ENCODE measurements at regions of chr3 and their contacts with region 1.

Region 1: DNA sequence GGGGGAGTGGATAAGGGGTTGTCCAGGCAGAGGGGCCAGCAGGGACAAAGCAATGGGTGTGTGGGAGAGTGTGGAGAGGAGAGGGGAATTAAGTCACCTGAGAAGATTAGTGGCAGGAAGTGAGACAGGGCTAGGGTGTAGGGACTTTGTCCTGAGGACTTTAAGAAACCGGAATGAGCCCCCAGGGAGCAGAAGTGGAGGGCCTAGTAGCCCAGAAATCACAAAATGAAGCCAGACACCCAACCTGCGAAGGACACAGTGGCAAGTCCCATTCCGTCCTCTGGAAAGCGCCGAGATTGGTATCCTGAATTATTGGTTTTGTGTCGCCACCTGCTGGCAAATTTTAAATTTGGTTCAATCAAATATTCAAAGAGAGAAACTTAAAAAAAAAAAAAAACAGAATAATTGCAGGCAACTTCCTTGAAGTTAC is 78.0 kb upstream of the SLC25A36 start:
- DNase-seq: peak; percentile 85
- H3K4me3 Mint-ChIP-seq: no peak overlapping the region
- H3K27ac Mint-ChIP-seq: no peak overlapping the region
- H3K4me1 Mint-ChIP-seq: no peaks in the 10 kb centered on the region
- H3K27me3 Mint-ChIP-seq: peaks cover 4% of the 10 kb centered on the region

Region 2: GRCh38 chr3:140128631-140129030 is 735.0 kb before region 1 on chr3:
- intact Hi-C with region 1: loop called (anchors 5 kb)
- DNase-seq: peak; percentile 59
- H3K4me3 Mint-ChIP-seq: no peak overlapping the region
- H3K27ac Mint-ChIP-seq: no peak overlapping the region
- H3K4me1 Mint-ChIP-seq: no peaks in the 10 kb centered on the region
- H3K27me3 Mint-ChIP-seq: no peaks in the 10 kb centered on the region

Region 3: DNA sequence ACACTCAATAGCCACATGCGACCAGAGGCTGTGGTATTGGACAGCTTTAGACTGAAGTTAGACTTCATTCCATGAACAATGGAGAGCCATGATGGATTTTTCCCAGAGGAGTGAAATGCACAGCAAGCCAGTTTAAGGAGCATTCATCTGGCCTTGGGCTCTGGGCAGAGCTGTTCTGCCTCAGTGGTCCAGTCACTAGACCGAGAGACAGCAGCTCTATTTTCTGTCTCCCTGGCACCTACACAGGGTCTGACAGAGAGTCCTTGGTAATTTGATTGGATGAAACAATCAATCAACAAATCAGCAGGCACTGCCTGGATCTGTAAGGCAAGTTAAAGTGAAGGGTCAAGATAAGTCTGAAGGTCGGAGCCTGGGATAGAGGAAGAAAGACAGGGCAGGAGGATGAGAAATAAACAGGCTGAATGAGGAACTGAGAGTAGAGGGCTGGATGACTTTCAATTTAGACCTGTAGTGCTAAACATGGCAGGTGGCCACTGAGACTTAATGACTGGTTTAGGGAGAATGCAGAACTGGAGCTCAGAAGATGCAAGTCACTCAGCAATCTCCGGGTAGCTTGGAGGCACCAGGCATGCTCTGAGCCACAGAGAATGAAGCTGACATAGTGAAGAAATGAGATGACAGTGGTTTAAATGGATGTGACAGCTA is 20.5 kb before region 1 on chr3:
- intact Hi-C with region 1: no loop called
- DNase-seq: no peak
- H3K4me3 Mint-ChIP-seq: no peak overlapping the region
- H3K27ac Mint-ChIP-seq: no peak overlapping the region
- H3K4me1 Mint-ChIP-seq: peaks cover 12% of the 10 kb centered on the region
- H3K27me3 Mint-ChIP-seq: peaks cover 18% of the 10 kb centered on the region